ENCODE measurements at regions of chr17 and their contacts with region 1.

Region 1: DNA sequence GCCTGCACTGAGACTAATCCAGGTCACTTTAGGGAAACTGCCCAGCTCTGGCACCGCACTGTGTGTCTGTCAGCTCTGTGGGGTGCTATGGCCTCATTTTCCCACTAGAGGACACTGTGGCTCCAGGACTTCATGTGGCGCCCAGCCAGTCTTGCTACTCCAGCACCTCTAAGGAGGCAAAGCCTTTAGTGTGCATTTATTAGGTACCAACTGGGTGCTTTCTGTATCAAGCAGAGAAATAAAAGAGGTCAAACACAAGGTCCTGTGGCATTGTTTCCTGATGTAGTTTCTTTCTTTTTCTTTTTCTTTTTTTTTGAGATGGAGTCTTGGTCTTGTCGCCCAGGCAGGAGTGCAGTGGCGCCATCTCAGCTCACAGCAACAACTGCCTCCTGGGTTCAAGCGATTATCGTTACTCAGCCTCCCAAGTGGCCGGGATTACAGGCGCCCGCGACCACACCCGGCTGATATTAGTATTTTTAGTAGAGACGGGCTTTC is 12.5 kb upstream of the RHBDL3 start:
- DNase-seq: peak; percentile 72 to 87 (median 77)
- ATAC-seq: peak; percentile 82 to 95 (median 93)
- H3K4me3 ChIP-seq: no peak overlapping the region
- H3K27ac ChIP-seq: no peak overlapping the region
- H3K4me1 ChIP-seq: peaks cover 0 to 5% (median 0%) of the 10 kb centered on the region in 12 donors
- H3K27me3 ChIP-seq: peaks cover 0 to under 1% (median 0%) of the 10 kb centered on the region in 9 donors
- CTCF ChIP-seq: peak; percentile 93 to 99 (median 96)
- POLR2A ChIP-seq: no peak

Region 2: DNA sequence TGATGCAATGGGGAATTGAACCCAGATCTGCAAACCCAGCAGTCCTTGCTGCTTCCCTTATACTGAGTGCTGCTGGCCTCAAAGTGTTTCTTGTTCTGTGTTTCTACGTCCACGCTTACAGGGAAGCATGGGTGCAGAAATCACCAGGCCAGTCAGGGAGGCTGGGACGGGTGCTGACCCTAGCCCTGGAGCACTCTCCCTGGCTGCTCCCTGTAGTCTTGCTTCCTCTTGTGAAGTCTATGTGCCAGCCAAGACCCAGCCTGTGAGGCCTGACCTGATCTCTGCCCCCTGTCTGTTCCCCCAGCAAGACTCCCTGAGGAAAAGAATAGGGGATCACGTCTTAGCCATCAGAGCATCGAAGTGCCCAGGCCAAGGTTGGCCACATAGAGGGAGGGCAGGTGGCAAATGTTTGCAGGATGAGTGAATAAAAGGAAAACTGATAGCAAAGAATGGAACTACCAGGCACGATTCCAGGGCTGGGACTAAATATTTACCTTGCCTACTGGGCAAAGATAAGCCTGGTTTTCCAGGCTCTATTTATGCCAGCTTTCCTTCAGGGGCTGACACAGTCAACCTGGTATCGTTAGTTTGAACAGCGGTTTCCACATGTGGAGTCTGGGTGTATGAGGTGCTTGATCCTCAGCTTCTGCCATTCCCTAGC is 152.1 kb before region 1 on chr17:
- intact Hi-C with region 1: no loop called
- DNase-seq: no peak
- ATAC-seq: peak in 3 of 4 donors; percentile 20 to 76 (median 39)
- H3K4me3 ChIP-seq: no peak overlapping the region
- H3K27ac ChIP-seq: no peak overlapping the region
- H3K4me1 ChIP-seq: peaks cover 0 to 16% (median 5%) of the 10 kb centered on the region in 12 donors
- H3K27me3 ChIP-seq: peaks cover 0 to 5% (median 0%) of the 10 kb centered on the region in 9 donors
- CTCF ChIP-seq: no peak
- POLR2A ChIP-seq: no peak

Region 3: DNA sequence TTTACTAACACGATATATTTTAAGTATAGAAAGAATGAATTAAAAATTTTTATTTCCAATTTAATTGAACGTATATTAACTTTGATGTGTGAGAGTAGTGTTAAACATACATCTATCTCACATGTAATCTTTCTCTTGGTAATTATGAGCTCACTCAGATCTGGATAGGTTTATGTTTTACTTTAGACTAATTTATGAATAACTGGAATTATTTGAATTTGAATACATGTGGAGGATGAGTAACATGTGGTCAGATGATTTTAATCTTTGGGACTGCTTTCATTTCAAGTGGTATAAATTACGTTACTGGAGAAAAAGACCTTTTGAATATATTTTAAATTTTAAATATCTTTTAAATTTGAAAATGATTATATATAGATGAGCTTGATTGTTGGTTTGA is 37.5 kb before region 1 on chr17:
- intact Hi-C with region 1: no loop called
- DNase-seq: no peak
- ATAC-seq: no peak
- H3K4me3 ChIP-seq: no peak overlapping the region
- H3K27ac ChIP-seq: no peak overlapping the region
- H3K4me1 ChIP-seq: peaks cover 0 to 8% (median 0%) of the 10 kb centered on the region in 12 donors
- H3K27me3 ChIP-seq: no peaks in the 10 kb centered on the region
- CTCF ChIP-seq: no peak
- POLR2A ChIP-seq: no peak

Region 4: GRCh38 chr17:32311028-32311536 is 57.9 kb after region 1 on chr17:
- intact Hi-C with region 1: loop called in 1 of 10 experiments (anchors 2 kb)
- DNase-seq: no peak
- ATAC-seq: peak in 1 of 4 donors; percentile 37
- H3K4me3 ChIP-seq: peak overlapping the region in 6 of 12 donors; percentile 1 to 48 (median 28)
- H3K27ac ChIP-seq: no peak overlapping the region
- H3K4me1 ChIP-seq: peaks cover 0 to 8% (median 0%) of the 10 kb centered on the region in 12 donors
- H3K27me3 ChIP-seq: peaks cover 0 to 9% (median 0%) of the 10 kb centered on the region in 9 donors
- CTCF ChIP-seq: no peak
- POLR2A ChIP-seq: no peak

Region 5: DNA sequence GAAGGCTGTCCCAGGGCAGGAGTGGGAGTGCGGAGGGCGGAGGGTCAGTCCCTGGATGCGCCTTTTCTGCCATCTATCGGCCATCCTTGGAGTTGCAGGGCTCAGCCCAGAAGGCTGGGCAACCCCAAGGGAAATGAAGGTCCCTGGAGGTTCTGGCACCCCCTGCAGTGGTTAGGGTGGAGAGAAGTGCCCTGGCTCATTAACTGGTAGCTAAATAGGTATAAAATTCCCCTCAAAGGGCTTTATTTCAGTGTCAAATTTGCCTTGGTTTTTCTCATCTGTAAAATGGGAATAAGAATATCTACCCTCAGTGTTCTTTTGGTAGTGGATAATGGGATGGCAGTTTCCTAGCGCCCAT is 66.4 kb after region 1 on chr17:
- intact Hi-C with region 1: loop called (anchors 1 to 2 kb)
- DNase-seq: peak; percentile 70 to 86 (median 77)
- ATAC-seq: peak; percentile 76 to 96 (median 90)
- H3K4me3 ChIP-seq: peak overlapping the region in 2 of 12 donors; percentile 12 to 42
- H3K27ac ChIP-seq: no peak overlapping the region
- H3K4me1 ChIP-seq: peaks cover 0 to 12% (median 0%) of the 10 kb centered on the region in 12 donors
- H3K27me3 ChIP-seq: peaks cover 0 to 4% (median 0%) of the 10 kb centered on the region in 9 donors
- CTCF ChIP-seq: peak; percentile 84 to 96 (median 94)
- POLR2A ChIP-seq: no peak

Region 6: GRCh38 chr17:32461853-32462617 is 208.9 kb after region 1 on chr17:
- intact Hi-C with region 1: no loop called
- DNase-seq: peak in 2 of 5 donors; percentile 32 to 35
- ATAC-seq: peak in 2 of 4 donors; percentile 50 to 64
- H3K4me3 ChIP-seq: no peak overlapping the region
- H3K27ac ChIP-seq: no peak overlapping the region
- H3K4me1 ChIP-seq: peaks cover 0 to 13% (median 0%) of the 10 kb centered on the region in 12 donors
- H3K27me3 ChIP-seq: no peaks in the 10 kb centered on the region
- CTCF ChIP-seq: peak; percentile 41 to 67 (median 54)
- POLR2A ChIP-seq: no peak

Measured in heart left ventricle (tissue), 16 donors.